PC-3 (cell line): ENCODE measurements at regions of chr1 and their contacts with region 1.

Region 1: DNA sequence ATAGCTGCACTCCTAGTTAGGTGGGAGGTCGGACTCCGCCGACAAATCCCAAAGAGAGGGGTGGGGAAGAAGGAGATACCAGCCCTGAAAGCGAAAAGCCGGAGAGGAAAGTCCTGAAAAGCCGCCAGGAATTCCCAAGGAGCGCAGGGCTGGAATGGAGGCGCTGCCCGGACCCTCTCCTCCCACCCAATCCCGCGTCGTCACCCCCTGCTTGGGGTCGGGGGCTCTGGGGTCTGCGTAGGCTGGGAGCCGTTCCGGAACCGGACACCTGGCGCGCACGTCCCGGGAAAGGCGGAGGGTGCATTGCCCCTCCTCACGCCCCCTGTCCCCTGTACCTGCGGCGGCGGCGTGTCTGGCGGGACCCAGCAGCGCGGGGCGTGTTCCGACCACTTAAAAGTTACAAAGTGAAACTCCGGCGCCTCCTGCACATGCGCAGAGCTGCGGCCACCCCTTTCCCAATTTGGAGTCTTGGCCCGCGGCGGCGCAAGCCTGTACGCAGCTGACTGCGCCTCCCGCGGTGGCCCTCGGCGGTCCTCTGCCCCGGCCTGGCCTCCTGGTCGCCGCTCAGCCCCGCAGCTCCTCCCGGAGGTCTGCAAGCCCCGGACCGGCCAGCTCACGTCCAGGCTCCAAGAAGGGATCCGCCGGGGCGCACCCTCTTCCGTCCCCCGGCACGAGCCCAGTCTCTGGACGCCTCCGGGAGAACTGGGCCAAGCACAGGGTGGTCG is at the start of gene TMEM63A:
- DNase-seq: peak; percentile 95
- ATAC-seq: peak; percentile 60
- H3K4me3 ChIP-seq: peak within 1 kb of the TSS; percentile 96
- H3K27ac ChIP-seq: peak within 1 kb of the TSS; percentile 98
- H3K4me1 ChIP-seq: peaks cover 63% of the 10 kb centered on the region
- H3K27me3 ChIP-seq: no peaks in the 10 kb centered on the region
- CTCF ChIP-seq: peak; percentile 46
- total RNA-seq, gene TMEM63A: 47.5 and 59.3 TPM in 2 replicates

Region 2: DNA sequence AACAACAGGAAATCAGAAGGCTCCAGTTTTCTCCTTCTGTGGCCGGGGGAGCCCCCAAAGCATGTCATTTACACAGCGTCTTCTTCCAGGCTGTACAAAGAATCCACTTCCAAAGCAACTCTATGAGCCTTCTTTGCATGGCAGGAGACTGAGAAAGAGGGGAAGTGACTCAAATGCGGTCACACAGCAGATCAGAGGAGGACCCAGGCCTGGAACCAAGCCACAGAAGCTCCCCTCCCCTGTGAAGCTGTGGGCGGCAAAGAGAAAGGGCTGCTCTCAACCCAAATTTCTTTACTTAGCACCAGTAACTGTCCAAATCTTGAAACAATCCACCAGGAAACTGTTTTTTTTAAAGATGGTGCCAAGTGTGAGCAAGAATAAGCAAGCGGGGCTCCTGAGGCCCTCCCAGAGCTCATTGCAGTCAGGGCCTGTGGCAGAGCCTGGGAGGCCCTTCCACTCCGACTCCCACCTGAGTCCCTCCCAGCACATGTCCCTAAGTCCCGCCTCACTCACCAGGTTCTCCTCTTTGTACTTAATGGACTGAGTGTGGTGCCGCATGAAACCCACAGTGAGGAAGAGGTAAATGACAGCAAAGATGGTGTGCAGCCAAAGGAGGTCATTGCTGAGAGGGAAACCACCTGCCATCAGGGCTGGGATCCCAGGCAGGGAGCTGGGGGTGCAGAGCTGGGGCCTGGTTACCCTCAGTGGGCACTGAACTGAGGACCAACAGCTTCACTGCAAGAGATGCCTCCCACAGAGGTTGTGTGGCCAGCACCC is 15.9 kb before region 1 on chr1:
- CTCF ChIA-PET with region 1: interaction called, 9 read pairs
- POLR2A ChIA-PET with region 1: interaction called, 16 read pairs
- intact Hi-C with region 1: loop called (anchors 1 kb)
- DNase-seq: peak; percentile 95
- ATAC-seq: peak; percentile 87
- H3K4me3 ChIP-seq: no peak overlapping the region; the same call in 1 of the 2 replicates
- H3K27ac ChIP-seq: peak overlapping the region; percentile 90
- H3K4me1 ChIP-seq: peaks cover 46% of the 10 kb centered on the region
- H3K27me3 ChIP-seq: no peaks in the 10 kb centered on the region
- CTCF ChIP-seq: no peak

Region 3: GRCh38 chr1:225871359-225872074 is 10.6 kb before region 1 on chr1:
- CTCF ChIA-PET with region 1: interaction called, 9 read pairs
- POLR2A ChIA-PET with region 1: interaction called, 16 read pairs
- intact Hi-C with region 1: loop called (anchors 1 kb)
- DNase-seq: peak; percentile 99
- ATAC-seq: peak; percentile 86
- H3K4me3 ChIP-seq: peak overlapping the region; percentile 26
- H3K27ac ChIP-seq: peak overlapping the region; percentile 92
- H3K4me1 ChIP-seq: peaks cover 68% of the 10 kb centered on the region
- H3K27me3 ChIP-seq: no peaks in the 10 kb centered on the region
- CTCF ChIP-seq: no peak

Region 4: DNA sequence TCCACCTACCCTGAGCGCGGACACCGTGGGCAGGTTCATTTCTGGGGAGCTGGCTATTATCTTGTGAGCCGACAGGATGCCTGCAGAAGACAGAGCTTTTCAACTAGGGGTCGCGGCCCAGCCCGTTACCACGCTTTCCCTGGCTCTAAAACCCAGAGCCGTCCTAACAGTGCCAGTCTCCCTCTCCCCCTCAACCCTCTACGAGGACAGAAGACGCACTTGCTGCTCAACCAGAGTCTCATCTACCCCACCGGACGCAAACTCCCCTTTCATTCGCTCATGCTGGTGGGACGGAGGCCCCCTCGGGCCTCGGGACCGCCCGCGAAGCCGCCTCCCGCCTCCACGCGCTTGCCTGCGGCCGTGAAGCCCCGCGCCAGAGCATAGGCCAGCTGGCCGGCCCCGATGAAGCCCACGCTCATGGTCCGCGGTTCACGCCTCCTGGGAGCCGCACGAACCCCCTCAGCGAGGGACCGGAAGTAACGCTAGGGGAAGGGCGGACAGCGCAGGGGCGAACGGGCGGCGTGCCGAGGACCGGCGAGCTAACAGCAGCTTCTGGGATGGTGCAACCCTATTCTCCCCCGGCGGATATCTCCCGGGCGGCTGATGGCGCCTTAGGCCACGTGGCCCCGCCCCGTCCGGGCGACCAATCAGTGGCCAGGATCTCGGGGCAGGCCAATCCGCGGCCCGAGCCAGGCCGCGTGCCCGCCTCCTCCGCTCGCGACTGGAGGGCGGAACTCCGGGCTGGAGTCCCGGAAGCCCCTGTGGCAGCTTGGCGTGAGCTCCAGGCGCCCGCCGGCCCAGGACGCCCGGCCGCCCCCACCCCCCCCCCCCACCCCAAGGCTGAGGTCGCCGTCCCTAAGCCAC is 41.8 kb after region 1 on chr1 and contains the start of gene PYCR2:
- CTCF ChIA-PET with region 1: no interaction called
- POLR2A ChIA-PET with region 1: interaction called, 14 read pairs
- intact Hi-C with region 1: loop called (anchors 2 kb)
- DNase-seq: peak; percentile 99
- ATAC-seq: peak; percentile 91
- H3K4me3 ChIP-seq: peak within 1 kb of the TSS; percentile 89
- H3K27ac ChIP-seq: peak within 1 kb of the TSS; percentile 72
- H3K4me1 ChIP-seq: peaks cover 46% of the 10 kb centered on the region
- H3K27me3 ChIP-seq: no peaks in the 10 kb centered on the region
- CTCF ChIP-seq: no peak
- total RNA-seq, gene PYCR2: 57.7 and 69.0 TPM in 2 replicates

Region 5: GRCh38 chr1:225977937-225978748 is 96.0 kb after region 1 on chr1:
- CTCF ChIA-PET with region 1: no interaction called
- POLR2A ChIA-PET with region 1: no interaction called
- intact Hi-C with region 1: loop called (anchors 1 kb)
- DNase-seq: no peak
- ATAC-seq: no peak
- H3K4me3 ChIP-seq: no peak overlapping the region
- H3K27ac ChIP-seq: no peak overlapping the region
- H3K4me1 ChIP-seq: peaks cover 2% of the 10 kb centered on the region; the same call in 1 of the 2 replicates
- H3K27me3 ChIP-seq: no peaks in the 10 kb centered on the region
- CTCF ChIP-seq: no peak